ENCODE measurements at regions of chr3 and their contacts with region 1.

Region 1: GRCh38 chr3:197186887-197187588 is 111.4 kb downstream of the DLG1 start:
- DNase-seq: peak in 6 of 9 experiments; percentile 6 to 74 (median 16)
- ATAC-seq: peak; percentile 79
- H3K4me3 ChIP-seq: no peak overlapping the region
- H3K4me3 Mint-ChIP-seq: no peak overlapping the region
- H3K27ac ChIP-seq: no peak overlapping the region
- H3K27ac Mint-ChIP-seq: no peak overlapping the region
- H3K4me1 ChIP-seq: no peaks in the 10 kb centered on the region
- H3K4me1 Mint-ChIP-seq: peaks cover 12% of the 10 kb centered on the region
- H3K27me3 ChIP-seq: no peaks in the 10 kb centered on the region
- H3K27me3 Mint-ChIP-seq: no peaks in the 10 kb centered on the region
- CTCF ChIP-seq: peak; percentile 94

Region 2: GRCh38 chr3:196837819-196838420 is 349.1 kb before region 1 on chr3:
- CTCF ChIA-PET with region 1: interaction called, 5 read pairs
- POLR2A ChIA-PET with region 1: no interaction called
- intact Hi-C with region 1: loop called (anchors 2 to 5 kb)
- DNase-seq: peak; percentile 39 to 85 (median 75)
- ATAC-seq: peak; percentile 96
- H3K4me3 ChIP-seq: no peak overlapping the region
- H3K4me3 Mint-ChIP-seq: no peak overlapping the region
- H3K27ac ChIP-seq: no peak overlapping the region
- H3K27ac Mint-ChIP-seq: no peak overlapping the region
- H3K4me1 ChIP-seq: no peaks in the 10 kb centered on the region
- H3K4me1 Mint-ChIP-seq: peaks cover 2% of the 10 kb centered on the region
- H3K27me3 ChIP-seq: no peaks in the 10 kb centered on the region
- H3K27me3 Mint-ChIP-seq: no peaks in the 10 kb centered on the region
- CTCF ChIP-seq: peak; percentile 83

Region 3: DNA sequence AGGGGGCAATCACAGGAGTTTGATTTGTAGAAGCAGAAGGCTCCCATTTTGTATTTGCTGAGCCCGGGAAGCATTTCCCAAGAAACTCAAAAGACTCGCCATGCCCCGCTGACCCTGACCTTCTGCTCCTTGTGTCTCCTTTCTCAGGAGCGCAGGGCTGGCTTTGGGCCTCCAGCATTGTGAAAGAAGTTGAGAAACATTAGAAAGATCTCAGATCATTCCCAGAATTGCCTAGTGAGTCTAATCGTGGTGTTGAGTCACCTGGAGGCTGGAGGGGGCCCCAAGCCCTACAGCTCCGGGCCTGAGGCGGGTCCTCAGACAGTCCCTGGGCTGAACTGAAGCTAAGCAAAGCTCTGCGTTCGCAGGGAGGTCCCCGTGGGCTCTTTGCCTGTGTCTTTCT is 207.5 kb before region 1 on chr3:
- CTCF ChIA-PET with region 1: no interaction called
- POLR2A ChIA-PET with region 1: no interaction called
- intact Hi-C with region 1: loop called (anchors 2 to 5 kb)
- DNase-seq: no peak
- ATAC-seq: no peak
- H3K4me3 ChIP-seq: no peak overlapping the region
- H3K4me3 Mint-ChIP-seq: no peak overlapping the region
- H3K27ac ChIP-seq: no peak overlapping the region
- H3K27ac Mint-ChIP-seq: no peak overlapping the region
- H3K4me1 ChIP-seq: no peaks in the 10 kb centered on the region
- H3K4me1 Mint-ChIP-seq: peaks cover 2% of the 10 kb centered on the region
- H3K27me3 ChIP-seq: peaks cover 2 to 4% of the 10 kb centered on the region in 2 experiments
- H3K27me3 Mint-ChIP-seq: peaks cover 6% of the 10 kb centered on the region
- CTCF ChIP-seq: no peak

Region 4: GRCh38 chr3:197002701-197003454 is 184.2 kb before region 1 on chr3:
- CTCF ChIA-PET with region 1: interaction called, 7 read pairs
- POLR2A ChIA-PET with region 1: no interaction called
- intact Hi-C with region 1: loop called (anchors 1 kb)
- DNase-seq: peak; percentile 49 to 92 (median 77)
- ATAC-seq: peak; percentile 82
- H3K4me3 ChIP-seq: peak overlapping the region; percentile 41 to 58
- H3K4me3 Mint-ChIP-seq: no peak overlapping the region
- H3K27ac ChIP-seq: no peak overlapping the region
- H3K27ac Mint-ChIP-seq: no peak overlapping the region
- H3K4me1 ChIP-seq: peaks cover 8% of the 10 kb centered on the region
- H3K4me1 Mint-ChIP-seq: peaks cover 12% of the 10 kb centered on the region
- H3K27me3 ChIP-seq: no peaks in the 10 kb centered on the region
- H3K27me3 Mint-ChIP-seq: no peaks in the 10 kb centered on the region
- CTCF ChIP-seq: peak; percentile 47

Region 5: GRCh38 chr3:197151569-197151968 is 35.5 kb before region 1 on chr3:
- CTCF ChIA-PET with region 1: no interaction called
- POLR2A ChIA-PET with region 1: no interaction called
- intact Hi-C with region 1: no loop called
- DNase-seq: no peak
- ATAC-seq: no peak
- H3K4me3 ChIP-seq: no peak overlapping the region
- H3K4me3 Mint-ChIP-seq: no peak overlapping the region
- H3K27ac ChIP-seq: no peak overlapping the region
- H3K27ac Mint-ChIP-seq: no peak overlapping the region
- H3K4me1 ChIP-seq: no peaks in the 10 kb centered on the region
- H3K4me1 Mint-ChIP-seq: peaks cover 14% of the 10 kb centered on the region
- H3K27me3 ChIP-seq: no peaks in the 10 kb centered on the region
- H3K27me3 Mint-ChIP-seq: no peaks in the 10 kb centered on the region
- CTCF ChIP-seq: no peak

Measured in CD8-positive, alpha-beta T cell (primary cell).